ENCODE measurements at regions of chr9 and their contacts with region 1.

Region 1: GRCh38 chr9:107922260-107922659 is 432.7 kb upstream of the KLF4 start:
- DNase-seq: no peak
- ATAC-seq: no peak

Region 2: GRCh38 chr9:107712390-107712789 is 209.9 kb before region 1 on chr9:
- intact Hi-C with region 1: no loop called
- DNase-seq: no peak
- ATAC-seq: no peak

Region 3: DNA sequence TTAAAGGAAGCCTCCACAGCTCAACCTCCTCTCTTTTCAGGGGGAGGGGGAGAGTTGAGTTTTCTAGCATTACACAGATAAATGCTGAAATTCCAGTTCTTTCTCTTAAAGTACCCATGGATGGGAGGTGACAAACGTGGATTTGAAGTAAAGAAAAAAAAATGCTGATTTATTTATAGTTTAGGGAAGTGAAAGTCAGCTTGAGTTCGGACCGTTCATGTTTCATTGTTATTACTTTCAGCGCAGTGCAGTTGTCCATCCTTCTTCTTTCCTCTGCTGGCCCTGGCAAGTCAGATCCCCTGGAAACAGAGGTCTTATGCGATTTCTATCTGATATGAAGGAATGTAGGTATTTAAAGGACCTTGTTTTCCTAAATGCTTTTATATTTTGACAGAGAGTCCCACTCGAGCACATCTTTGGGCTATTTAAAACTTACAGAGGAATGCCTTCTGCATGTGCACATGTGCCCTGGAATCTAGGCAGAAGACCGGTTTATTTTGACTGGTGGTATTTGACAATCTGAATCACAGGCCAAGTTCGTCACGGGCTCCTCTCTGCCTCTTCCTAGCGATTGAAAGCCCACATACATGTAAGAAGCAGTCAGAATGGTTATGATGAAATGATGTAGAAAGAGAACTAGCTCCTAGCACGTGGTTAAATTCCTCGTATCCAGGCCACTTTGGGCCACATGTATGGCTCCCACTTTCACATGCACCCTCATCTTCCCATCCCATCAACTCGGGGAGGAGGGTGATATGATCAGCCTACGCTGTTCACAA is 47.5 kb before region 1 on chr9:
- intact Hi-C with region 1: no loop called
- DNase-seq: no peak
- ATAC-seq: no peak

Region 4: GRCh38 chr9:109017493-109017892 is 1095.2 kb after region 1 on chr9:
- intact Hi-C with region 1: loop called (anchors 5 kb)
- DNase-seq: no peak
- ATAC-seq: no peak

Measured in sciatic nerve (tissue), 2 donors.